Panc1 (cell line): ENCODE measurements at regions of chr12 and their contacts with region 1.

Region 1: DNA sequence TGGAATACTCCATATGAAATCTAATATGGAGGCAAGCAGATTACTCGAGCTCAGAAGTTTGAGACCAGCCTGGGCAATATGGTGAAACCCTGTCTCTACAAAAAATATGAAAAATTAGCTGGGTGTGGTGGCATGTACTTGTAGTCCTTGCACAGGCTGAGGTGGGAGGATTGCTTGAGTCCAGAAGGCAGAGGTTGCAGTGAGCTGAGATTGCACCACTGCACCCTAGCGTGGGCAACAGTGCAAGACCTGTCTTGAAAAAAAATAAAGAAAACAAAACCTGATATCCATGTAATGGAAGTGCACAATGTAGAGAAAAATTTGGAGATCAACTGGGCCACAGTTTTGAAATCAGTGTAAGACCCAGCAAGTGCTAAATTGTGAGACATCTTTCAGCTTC is 17.4 kb downstream of the C12orf56 start:
- DNase-seq: no peak
- ATAC-seq: no peak
- H3K4me3 ChIP-seq: no peak overlapping the region
- H3K27ac ChIP-seq: no peak overlapping the region
- H3K4me1 ChIP-seq: no peaks in the 10 kb centered on the region
- H3K27me3 ChIP-seq: no peaks in the 10 kb centered on the region
- CTCF ChIP-seq: no peak

Region 2: GRCh38 chr12:64385468-64385867 is 12.3 kb after region 1 on chr12:
- CTCF ChIA-PET with region 1: no interaction called
- POLR2A ChIA-PET with region 1: interaction called, 18 read pairs
- in situ Hi-C with region 1: no loop called
- intact Hi-C with region 1: no loop called
- DNase-seq: no peak
- ATAC-seq: no peak
- H3K4me3 ChIP-seq: no peak overlapping the region
- H3K27ac ChIP-seq: no peak overlapping the region
- H3K4me1 ChIP-seq: peaks cover 3% of the 10 kb centered on the region; the same call in 1 of the 2 replicates
- H3K27me3 ChIP-seq: no peaks in the 10 kb centered on the region
- CTCF ChIP-seq: no peak

Region 3: GRCh38 chr12:64392221-64392620 is 19.0 kb after region 1 on chr12:
- CTCF ChIA-PET with region 1: interaction called, 3 read pairs
- POLR2A ChIA-PET with region 1: interaction called, 15 read pairs
- in situ Hi-C with region 1: no loop called
- intact Hi-C with region 1: no loop called
- DNase-seq: no peak
- ATAC-seq: peak; percentile 56
- H3K4me3 ChIP-seq: no peak overlapping the region
- H3K27ac ChIP-seq: no peak overlapping the region
- H3K4me1 ChIP-seq: peaks cover 7% of the 10 kb centered on the region
- H3K27me3 ChIP-seq: no peaks in the 10 kb centered on the region
- CTCF ChIP-seq: peak; percentile 68

Region 4: GRCh38 chr12:64744422-64745258 is 371.4 kb after region 1 on chr12:
- CTCF ChIA-PET with region 1: no interaction called
- POLR2A ChIA-PET with region 1: no interaction called
- in situ Hi-C with region 1: no loop called
- intact Hi-C with region 1: no loop called
- DNase-seq: no peak
- ATAC-seq: no peak
- H3K4me3 ChIP-seq: no peak overlapping the region
- H3K27ac ChIP-seq: no peak overlapping the region
- H3K4me1 ChIP-seq: peaks cover 2% of the 10 kb centered on the region; the same call in 1 of the 2 replicates
- H3K27me3 ChIP-seq: no peaks in the 10 kb centered on the region
- CTCF ChIP-seq: no peak